K562 (cell line): ENCODE measurements at regions of chr9 and their contacts with region 1.

Region 1: GRCh38 chr9:120868676-120869359 is 8.2 kb downstream of the PHF19 start:
- DNase-seq: peak; percentile 100
- ATAC-seq: peak; percentile 98
- H3K4me3 ChIP-seq: peak overlapping the region; percentile 41
- H3K27ac ChIP-seq: peak overlapping the region; percentile 76
- H3K4me1 ChIP-seq: peaks cover 13 to 27% of the 10 kb centered on the region in 2 experiments
- H3K27me3 ChIP-seq: no peaks in the 10 kb centered on the region
- CTCF ChIP-seq: peak in 1 of 3 experiments; percentile 91; a peak in 2 of 6 replicates
- EP300 ChIP-seq: no peak
- POLR2A ChIP-seq: no peak
- RAD21 ChIP-seq: peak in 1 of 2 experiments; percentile 94; a peak in 2 of 4 replicates

Region 2: DNA sequence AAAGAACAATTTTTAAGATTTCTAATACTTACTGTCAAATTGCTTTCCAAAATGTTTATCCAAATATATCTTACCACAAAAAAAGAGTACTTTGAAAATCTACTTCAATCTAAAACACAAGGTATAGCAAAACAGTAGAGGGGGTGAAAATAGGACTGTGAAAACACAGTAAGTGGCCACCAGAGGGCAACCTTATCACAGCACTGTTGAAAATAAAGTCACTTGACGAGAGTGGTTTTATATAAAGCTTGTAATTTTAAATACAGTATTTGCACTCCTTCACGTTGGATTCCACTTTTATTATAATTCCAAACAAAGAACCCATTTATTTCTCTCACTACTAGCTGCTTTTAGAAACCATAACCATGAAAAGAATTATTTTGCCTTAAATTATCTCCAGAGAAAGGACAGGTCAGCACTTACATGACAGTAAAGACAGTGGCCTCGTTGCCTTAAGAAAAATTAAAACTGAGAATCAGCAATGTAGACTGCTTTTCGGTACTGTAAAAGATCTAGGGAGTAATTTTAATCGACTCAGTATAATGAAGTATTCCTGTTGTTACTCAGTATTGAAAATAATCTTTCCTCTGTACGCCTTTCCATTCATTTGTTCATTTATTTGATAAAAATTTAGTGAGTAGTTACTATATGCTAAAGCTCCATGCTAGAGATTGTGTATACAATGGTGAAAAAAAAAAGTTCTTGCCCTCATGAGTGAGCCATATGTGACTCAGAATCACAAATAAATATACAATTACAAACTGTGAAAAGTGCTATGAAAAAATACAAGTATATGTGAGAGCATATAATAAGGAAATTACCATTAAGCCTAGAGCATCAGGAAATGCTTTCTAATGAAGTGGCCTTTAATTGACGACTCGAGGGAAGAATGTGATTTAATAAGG is 248.8 kb before region 1 on chr9:
- CTCF ChIA-PET with region 1: no interaction called
- POLR2A ChIA-PET with region 1: no interaction called
- in situ Hi-C with region 1: no loop called
- intact Hi-C with region 1: loop called (anchors 10 kb)
- DNase-seq: peak; percentile 69 to 78 (median 69)
- ATAC-seq: peak; percentile 95
- H3K4me3 ChIP-seq: no peak overlapping the region
- H3K27ac ChIP-seq: no peak overlapping the region
- H3K4me1 ChIP-seq: no peaks in the 10 kb centered on the region
- H3K27me3 ChIP-seq: no peaks in the 10 kb centered on the region
- CTCF ChIP-seq: peak; percentile 75 to 87 (median 81)
- EP300 ChIP-seq: no peak
- POLR2A ChIP-seq: no peak
- RAD21 ChIP-seq: peak; percentile 71 to 81

Region 3: GRCh38 chr9:120630333-120630732 is 238.5 kb before region 1 on chr9:
- CTCF ChIA-PET with region 1: no interaction called
- POLR2A ChIA-PET with region 1: no interaction called
- in situ Hi-C with region 1: no loop called
- intact Hi-C with region 1: no loop called
- DNase-seq: no peak
- ATAC-seq: no peak
- H3K4me3 ChIP-seq: no peak overlapping the region
- H3K27ac ChIP-seq: no peak overlapping the region
- H3K4me1 ChIP-seq: no peaks in the 10 kb centered on the region
- H3K27me3 ChIP-seq: no peaks in the 10 kb centered on the region
- CTCF ChIP-seq: no peak
- EP300 ChIP-seq: no peak
- POLR2A ChIP-seq: no peak
- RAD21 ChIP-seq: no peak

Region 4: GRCh38 chr9:120851386-120851922 is 17.4 kb before region 1 on chr9:
- CTCF ChIA-PET with region 1: no interaction called
- POLR2A ChIA-PET with region 1: interaction called, 55 read pairs
- in situ Hi-C with region 1: no loop called
- intact Hi-C with region 1: no loop called
- DNase-seq: no peak
- ATAC-seq: no peak
- H3K4me3 ChIP-seq: no peak overlapping the region
- H3K27ac ChIP-seq: no peak overlapping the region
- H3K4me1 ChIP-seq: peaks cover 0 to 8% of the 10 kb centered on the region in 2 experiments; a peak in 2 of 5 replicates
- H3K27me3 ChIP-seq: no peaks in the 10 kb centered on the region
- CTCF ChIP-seq: no peak
- EP300 ChIP-seq: no peak
- POLR2A ChIP-seq: no peak
- RAD21 ChIP-seq: no peak

Region 5: DNA sequence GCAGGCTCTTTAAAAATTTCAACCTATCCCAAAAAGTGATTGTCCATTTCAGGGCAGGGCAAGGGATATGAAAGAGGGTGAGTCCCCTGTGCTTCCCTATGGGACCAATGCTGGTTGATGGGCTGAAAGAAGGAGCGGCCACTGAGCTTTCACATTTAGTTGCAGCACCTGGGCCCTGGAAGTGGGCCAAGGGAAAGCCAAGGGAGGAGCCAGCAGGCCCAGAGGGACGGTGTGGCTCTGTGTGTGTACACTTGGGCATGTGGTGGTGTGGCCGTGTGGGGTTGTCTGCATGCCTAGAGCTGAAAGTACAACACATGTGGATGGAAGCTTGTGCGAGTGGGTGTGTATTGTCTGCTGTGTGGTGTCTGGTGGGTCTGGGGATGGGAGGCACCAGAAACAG is 12.1 kb before region 1 on chr9:
- CTCF ChIA-PET with region 1: no interaction called
- POLR2A ChIA-PET with region 1: interaction called, 55 read pairs
- in situ Hi-C with region 1: no loop called
- intact Hi-C with region 1: no loop called
- DNase-seq: no peak
- ATAC-seq: peak; percentile 10
- H3K4me3 ChIP-seq: no peak overlapping the region
- H3K27ac ChIP-seq: no peak overlapping the region
- H3K4me1 ChIP-seq: peaks cover 0 to 7% of the 10 kb centered on the region in 2 experiments; a peak in 1 of 5 replicates
- H3K27me3 ChIP-seq: no peaks in the 10 kb centered on the region
- CTCF ChIP-seq: no peak
- EP300 ChIP-seq: no peak
- POLR2A ChIP-seq: no peak
- RAD21 ChIP-seq: no peak

Region 6: DNA sequence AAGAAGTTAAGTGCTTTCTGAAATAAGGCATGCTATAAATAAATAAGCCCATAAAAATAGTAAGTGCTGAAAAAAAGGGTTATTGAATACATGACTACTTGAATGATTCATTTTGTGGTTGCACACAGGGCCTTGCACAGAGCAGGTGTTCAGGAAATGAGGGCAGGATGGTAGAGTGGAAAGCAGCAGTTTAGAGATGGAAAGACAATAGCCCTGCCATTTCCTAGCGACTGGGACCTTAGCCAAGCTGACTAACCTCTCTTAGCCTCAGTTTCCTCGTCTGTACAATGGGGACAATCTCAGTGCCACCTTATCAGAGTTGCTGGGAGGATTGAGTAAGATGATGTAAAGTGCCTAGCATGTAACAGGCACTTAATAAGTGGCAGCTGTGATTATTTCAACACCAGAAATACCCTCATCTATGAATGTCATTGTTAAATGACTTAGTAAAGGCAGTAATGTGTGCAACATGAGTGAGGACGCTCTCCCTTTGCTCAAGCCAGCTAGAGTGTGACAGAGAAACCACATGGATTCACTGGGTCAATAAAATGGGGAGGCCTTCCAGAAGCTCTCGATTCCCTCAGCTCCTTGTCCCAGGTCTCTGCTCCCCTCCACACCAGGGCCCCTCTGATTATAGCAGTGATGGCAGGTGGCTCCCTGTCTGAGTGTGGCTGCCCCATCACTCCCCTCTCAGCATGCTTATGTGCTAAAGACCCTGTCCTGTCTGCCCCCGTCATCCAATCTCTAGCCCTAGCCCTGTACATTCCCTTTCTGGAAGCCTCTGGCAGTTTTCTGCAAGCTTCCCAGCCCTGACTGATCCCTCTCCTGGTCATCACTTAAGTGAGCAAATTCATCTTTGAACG is 24.2 kb after region 1 on chr9:
- CTCF ChIA-PET with region 1: no interaction called
- POLR2A ChIA-PET with region 1: interaction called, 464 read pairs
- in situ Hi-C with region 1: no loop called
- intact Hi-C with region 1: no loop called
- DNase-seq: peak in 3 of 4 experiments; percentile 24 to 33 (median 31)
- ATAC-seq: no peak
- H3K4me3 ChIP-seq: no peak overlapping the region
- H3K27ac ChIP-seq: peak overlapping the region; percentile 10; the same call in 1 of the 3 replicates
- H3K4me1 ChIP-seq: peaks cover 41 to 57% of the 10 kb centered on the region in 2 experiments
- H3K27me3 ChIP-seq: no peaks in the 10 kb centered on the region
- CTCF ChIP-seq: no peak
- EP300 ChIP-seq: no peak
- POLR2A ChIP-seq: no peak
- RAD21 ChIP-seq: no peak

Region 7: DNA sequence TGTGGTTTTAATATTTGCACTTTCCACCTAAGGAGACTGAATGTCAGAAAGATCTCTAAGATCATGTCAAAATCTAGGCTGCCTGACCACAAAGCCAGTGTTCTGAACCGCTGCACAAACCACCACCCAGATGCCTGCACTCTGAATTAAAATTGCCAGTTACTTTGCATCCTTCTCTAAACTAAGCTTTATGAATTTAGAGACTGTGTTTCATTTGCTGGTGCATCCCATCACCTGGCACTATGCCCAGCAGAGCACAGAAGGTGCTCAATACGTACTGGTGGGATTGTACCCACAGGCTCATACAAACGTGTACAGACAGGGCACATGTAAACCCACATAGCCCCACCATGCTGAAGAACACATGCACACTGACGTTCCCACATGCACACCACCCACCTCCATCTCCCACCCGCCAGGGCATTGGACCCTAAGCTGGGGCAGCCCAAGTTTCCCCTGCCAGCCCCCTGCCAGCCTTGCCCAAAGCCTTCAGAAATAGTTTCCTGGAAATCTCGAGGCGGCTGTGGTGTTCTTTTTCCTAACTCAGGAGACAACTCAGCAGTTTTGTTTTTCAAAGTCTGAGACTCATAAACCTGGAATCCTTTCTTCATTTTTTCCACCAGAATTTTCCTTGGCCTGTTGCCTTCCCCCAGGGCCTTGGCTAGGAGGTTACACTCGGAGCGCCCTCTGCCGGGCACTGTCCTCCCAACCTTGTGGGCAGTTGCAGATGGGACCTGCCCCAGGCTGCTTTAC is 67.4 kb after region 1 on chr9:
- CTCF ChIA-PET with region 1: interaction called, 3 read pairs
- POLR2A ChIA-PET with region 1: no interaction called
- in situ Hi-C with region 1: no loop called
- intact Hi-C with region 1: loop called (anchors 2 kb)
- DNase-seq: peak; percentile 85 to 92 (median 90)
- ATAC-seq: peak; percentile 96
- H3K4me3 ChIP-seq: no peak overlapping the region
- H3K27ac ChIP-seq: no peak overlapping the region
- H3K4me1 ChIP-seq: peaks cover 13 to 40% of the 10 kb centered on the region in 2 experiments
- H3K27me3 ChIP-seq: peaks cover 2 to 7% of the 10 kb centered on the region in 2 experiments; a peak in 3 of 5 replicates
- CTCF ChIP-seq: peak; percentile 91 to 96 (median 92)
- EP300 ChIP-seq: no peak
- POLR2A ChIP-seq: no peak
- RAD21 ChIP-seq: peak; percentile 89 to 96

Region 8: DNA sequence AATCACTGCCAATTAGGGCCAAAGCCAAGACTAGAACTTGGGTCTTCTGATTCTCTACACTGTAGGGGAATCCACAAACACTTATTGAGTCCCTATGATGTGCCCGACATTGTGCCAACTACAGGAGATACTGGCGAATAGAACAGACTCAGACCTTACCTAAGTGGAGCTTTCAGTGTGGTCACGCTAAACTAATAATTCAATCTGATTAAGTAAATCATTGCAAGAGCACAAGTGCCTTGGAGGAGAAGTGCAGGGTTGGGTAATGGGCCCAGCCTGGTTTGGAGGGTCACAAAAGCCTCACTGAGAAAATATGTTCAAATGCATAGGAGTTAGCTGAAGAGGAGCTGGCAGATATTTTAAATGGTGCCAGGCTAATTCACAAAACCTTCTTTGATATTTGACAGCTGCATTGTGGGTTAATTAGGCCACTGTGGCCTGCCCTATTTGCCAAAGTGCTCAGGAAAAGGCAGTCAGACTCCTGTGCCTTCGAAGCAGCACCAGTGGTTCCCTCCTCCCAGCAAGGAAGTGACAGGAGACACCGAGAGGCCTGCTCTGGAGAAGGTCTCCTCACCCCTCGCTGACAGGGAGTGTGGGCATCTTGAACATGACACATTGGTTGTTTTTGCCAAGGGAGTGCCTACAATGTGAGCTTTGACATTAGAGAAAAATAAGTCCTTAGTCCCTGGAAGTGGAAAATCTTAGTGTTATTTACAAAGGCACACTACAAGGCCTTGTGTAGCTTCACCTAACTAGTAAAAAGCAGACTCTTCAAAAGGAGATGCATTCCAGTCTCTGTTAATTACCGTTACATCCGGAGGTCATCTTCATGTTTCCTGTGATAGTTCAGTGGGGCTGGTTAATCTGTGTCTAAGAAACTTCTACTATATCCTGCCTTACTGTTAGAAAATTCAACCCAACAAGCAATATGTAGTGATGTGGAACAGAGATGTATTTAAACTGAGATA is 81.9 kb after region 1 on chr9:
- CTCF ChIA-PET with region 1: no interaction called
- POLR2A ChIA-PET with region 1: no interaction called
- in situ Hi-C with region 1: no loop called
- intact Hi-C with region 1: no loop called
- DNase-seq: no peak
- ATAC-seq: 0 out of 3 replicates have a peak, but pooled peaks have one; percentile 28
- H3K4me3 ChIP-seq: no peak overlapping the region
- H3K27ac ChIP-seq: no peak overlapping the region
- H3K4me1 ChIP-seq: no peaks in the 10 kb centered on the region; a peak in 1 of 5 replicates
- H3K27me3 ChIP-seq: no peaks in the 10 kb centered on the region
- CTCF ChIP-seq: no peak
- EP300 ChIP-seq: no peak
- POLR2A ChIP-seq: no peak
- RAD21 ChIP-seq: no peak

Region 9: GRCh38 chr9:120998111-120998510 is 129.3 kb after region 1 on chr9:
- CTCF ChIA-PET with region 1: no interaction called
- POLR2A ChIA-PET with region 1: no interaction called
- in situ Hi-C with region 1: no loop called
- intact Hi-C with region 1: no loop called
- DNase-seq: no peak
- ATAC-seq: no peak
- H3K4me3 ChIP-seq: no peak overlapping the region
- H3K27ac ChIP-seq: no peak overlapping the region
- H3K4me1 ChIP-seq: no peaks in the 10 kb centered on the region
- H3K27me3 ChIP-seq: no peaks in the 10 kb centered on the region
- CTCF ChIP-seq: no peak
- EP300 ChIP-seq: no peak
- POLR2A ChIP-seq: no peak
- RAD21 ChIP-seq: no peak

Region 10: DNA sequence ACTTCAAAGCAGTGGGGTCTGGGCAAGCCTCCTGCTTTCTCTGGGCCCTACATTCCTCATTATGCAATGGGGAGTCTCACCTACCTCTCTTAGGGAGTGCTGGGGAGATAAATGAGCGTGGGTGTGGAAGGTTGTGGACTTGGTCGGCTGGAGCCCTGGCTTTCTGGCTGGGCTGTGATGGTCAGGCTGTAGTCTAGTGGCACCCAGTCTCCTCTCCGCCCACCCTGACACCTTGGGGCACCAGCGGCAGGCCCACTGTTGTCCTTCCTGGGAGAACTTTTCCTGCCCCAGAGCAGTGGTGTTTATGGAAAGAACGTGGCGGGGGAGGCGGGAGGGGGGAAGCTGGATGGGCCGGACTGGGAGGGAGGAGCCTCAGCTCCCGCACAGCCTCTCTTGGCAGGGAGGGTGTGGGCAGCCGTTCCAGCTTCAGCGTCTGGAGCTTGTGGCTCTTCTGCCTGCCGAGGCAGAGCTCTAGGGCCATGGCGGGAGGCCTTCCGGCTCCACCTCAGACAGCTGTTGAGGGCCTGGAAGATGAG is 1506.1 kb after region 1 on chr9:
- CTCF ChIA-PET with region 1: no interaction called
- POLR2A ChIA-PET with region 1: no interaction called
- in situ Hi-C with region 1: no loop called
- intact Hi-C with region 1: no loop called
- DNase-seq: peak; percentile 78 to 87 (median 84)
- ATAC-seq: peak; percentile 66
- H3K4me3 ChIP-seq: peak overlapping the region; percentile 10; the same call in 1 of the 2 replicates
- H3K27ac ChIP-seq: peak overlapping the region; percentile 76
- H3K4me1 ChIP-seq: peaks cover 60 to 67% of the 10 kb centered on the region in 2 experiments
- H3K27me3 ChIP-seq: no peaks in the 10 kb centered on the region
- CTCF ChIP-seq: no peak
- EP300 ChIP-seq: 0 out of 2 replicates have a peak, but pooled peaks have one; percentile 4
- POLR2A ChIP-seq: no peak
- RAD21 ChIP-seq: no peak